Sciatic nerve (tissue), 2 donors: ENCODE measurements at regions of chr6 and their contacts with region 1.

Region 1: GRCh38 chr6:86937219-86938079 is at the start of gene HTR1E:
- DNase-seq: no peak
- ATAC-seq: peak; percentile 53
- total RNA-seq, gene HTR1E: not detected

Region 2: DNA sequence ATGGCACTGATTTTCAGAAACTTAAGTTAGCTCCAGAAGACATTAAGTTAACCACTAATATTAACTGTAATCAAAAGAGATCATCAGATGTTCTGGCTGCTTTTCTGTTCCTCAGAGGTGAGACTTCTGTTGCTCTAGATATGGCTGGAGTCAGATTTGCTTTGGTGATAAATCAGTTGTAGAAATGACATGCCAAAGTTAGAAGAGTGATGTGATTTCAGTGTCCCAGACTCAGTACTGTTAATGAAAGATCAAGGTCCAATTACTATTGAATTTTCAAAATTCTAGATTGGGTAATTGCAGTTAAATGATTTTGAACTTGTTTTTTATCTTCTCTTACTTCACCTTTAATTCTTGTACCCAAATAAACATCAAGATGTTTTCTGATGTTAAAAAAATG is 892.4 kb before region 1 on chr6:
- intact Hi-C with region 1: no loop called
- DNase-seq: no peak
- ATAC-seq: no peak

Region 3: GRCh38 chr6:88184921-88185320 is 1247.5 kb after region 1 on chr6:
- intact Hi-C with region 1: loop called (anchors 5 kb)
- DNase-seq: no peak
- ATAC-seq: no peak